Posterior cingulate gyrus (tissue), 11 donors: ENCODE measurements at regions of chr3 and their contacts with region 1.

Region 1: DNA sequence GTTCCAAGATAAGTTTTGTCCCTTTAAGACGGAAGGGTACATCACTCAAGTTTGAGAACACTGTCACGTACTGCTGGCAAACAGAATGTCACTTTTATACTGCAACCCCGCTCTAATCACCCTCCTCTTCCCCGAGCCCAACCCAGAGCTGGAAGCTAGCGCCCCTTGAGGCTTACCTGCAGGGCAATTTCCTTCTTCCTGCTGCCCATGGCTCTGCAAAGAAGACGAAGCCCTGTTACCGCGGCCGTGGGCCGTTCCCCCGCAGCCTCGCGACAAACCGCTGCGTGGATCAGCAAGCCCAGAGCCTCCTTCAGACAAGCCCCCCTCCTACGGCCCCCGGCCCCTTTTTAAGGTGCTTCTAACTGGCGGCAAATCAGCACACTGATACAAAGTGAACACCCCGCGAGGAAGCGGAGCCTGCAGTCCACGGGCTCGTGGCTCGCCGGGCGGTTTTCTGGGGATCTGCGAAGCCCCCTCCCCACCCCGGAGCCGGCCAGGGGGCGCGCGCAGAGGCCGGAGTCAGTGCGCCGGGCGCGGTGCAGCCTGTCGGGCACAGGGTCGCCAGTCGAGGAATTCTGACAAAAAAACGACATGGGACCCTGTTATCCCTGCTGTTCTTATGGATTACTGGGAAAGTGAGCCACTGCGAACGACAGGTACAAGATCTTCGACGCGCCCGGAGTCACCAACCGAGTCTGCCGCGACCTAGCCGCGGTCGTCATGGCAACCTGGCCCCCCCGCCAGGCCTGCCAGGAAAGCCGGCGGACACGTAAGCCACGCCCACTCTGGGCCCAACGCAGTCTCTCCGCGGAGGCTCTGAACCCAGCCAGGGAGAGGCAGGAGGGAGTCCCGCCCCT is at the start of gene NME9:
- DNase-seq: peak; percentile 78 to 99 (median 94)

Region 2: DNA sequence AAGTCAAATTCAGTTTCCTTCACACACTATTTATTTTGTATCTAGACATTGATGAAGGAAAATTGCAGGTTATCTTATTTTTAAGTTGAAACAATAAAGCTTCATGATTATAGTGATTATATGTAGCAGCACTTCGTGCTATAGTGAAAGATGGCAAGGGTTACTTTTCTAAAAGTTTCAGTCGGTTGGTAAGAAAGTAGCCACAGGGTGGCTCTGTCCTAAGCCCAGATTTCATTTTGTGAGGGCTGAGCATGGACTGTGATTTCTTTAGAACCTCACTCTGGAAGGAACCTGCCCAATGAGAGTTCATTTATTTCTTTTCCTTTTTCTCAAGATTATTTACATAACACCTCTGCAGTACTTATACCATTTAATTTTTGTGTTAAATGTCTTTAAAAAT is 66.3 kb before region 1 on chr3:
- intact Hi-C with region 1: loop called (anchors 5 kb)
- DNase-seq: peak in 1 of 10 donors; percentile 8

Region 3: GRCh38 chr3:138361561-138361971 is 32.2 kb after region 1 on chr3:
- intact Hi-C with region 1: no loop called
- DNase-seq: peak in 2 of 10 donors; percentile 70 to 81

Region 4: GRCh38 chr3:138397983-138398382 is 68.6 kb after region 1 on chr3:
- intact Hi-C with region 1: loop called (anchors 5 kb)
- DNase-seq: peak in 4 of 10 donors; percentile 33 to 49 (median 38)